GM12878 (cell line): ENCODE measurements at regions of chr6 and their contacts with region 1.

Region 1: DNA sequence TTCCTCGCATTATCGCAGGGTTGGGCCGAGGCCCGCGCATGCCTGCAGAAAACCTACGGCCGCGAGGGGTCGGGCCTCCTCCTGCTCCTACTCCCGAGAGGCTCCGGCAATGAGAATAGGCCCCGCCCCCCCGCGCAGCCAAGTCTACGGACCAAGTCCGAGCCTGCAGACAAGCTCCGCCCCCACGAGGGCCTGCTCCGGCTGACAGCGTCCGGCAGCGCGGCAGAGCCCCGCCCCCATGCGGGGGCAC is 3.1 kb upstream of the GPSM3 start:
- DNase-seq: peak; percentile 97
- ATAC-seq: peak; percentile 85
- H3K4me3 ChIP-seq: no peak overlapping the region
- H3K27ac ChIP-seq: no peak overlapping the region; the same call in 1 of the 2 replicates
- H3K4me1 ChIP-seq: peaks cover 26% of the 10 kb centered on the region
- H3K27me3 ChIP-seq: no peaks in the 10 kb centered on the region
- CTCF ChIP-seq: peak; percentile 13 to 34 (median 31); a peak in 4 of 6 replicates
- EP300 ChIP-seq: no peak
- POLR2A ChIP-seq: no peak
- RAD21 ChIP-seq: no peak

Region 2: DNA sequence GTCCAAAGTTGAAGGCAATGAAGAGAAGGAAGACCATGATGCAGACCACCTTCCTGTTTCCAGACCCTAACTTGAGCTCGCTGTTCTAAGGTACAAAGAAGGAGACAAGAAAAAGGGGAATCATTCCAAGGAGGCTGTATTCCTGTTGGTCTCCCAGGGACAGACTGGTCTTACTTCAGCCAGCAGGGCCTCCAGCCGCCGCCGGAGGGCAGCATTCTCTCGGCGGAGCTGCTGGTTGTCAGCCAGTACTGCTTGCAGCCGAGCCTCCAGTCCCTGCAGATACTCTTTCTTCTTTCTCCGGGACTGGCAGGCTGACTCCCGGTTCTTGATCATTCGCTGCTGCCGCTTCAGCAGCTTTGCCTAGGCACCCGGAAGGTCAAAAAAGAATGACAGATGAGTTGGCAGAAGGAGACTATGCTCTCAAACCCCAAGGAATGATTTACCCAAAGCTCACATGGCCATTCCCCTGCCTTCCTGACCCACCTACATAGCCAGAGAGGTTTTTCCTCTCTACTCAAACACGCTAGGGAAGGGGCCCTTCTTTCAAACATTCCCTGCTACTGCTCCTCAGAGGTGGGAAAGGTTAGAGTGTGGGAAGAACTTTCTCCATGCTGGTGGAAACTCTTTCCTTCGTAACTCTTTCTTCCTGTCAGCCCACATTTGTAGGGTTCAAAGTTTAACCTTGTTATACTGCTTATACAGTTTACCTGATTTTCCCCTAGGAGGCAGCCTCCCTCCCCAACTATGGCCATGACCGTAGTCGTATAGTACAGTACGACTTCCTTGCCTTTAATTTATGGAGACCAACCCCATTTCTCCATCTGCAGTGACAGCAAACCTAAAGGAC is 76.6 kb before region 1 on chr6:
- CTCF ChIA-PET with region 1: interaction called, 16 read pairs
- POLR2A ChIA-PET with region 1: interaction called, 5 read pairs
- RAD21 ChIA-PET with region 1: interaction called, 3 read pairs
- SMC1A ChIA-PET with region 1: interaction called, 5 read pairs
- in situ Hi-C with region 1: no loop called
- intact Hi-C with region 1: loop called (anchors 1 kb)
- DNase-seq: peak; percentile 24
- ATAC-seq: peak; percentile 99
- H3K4me3 ChIP-seq: no peak overlapping the region
- H3K27ac ChIP-seq: no peak overlapping the region
- H3K4me1 ChIP-seq: no peaks in the 10 kb centered on the region
- H3K27me3 ChIP-seq: no peaks in the 10 kb centered on the region
- CTCF ChIP-seq: peak; percentile 93 to 96 (median 95)
- EP300 ChIP-seq: no peak
- POLR2A ChIP-seq: no peak; the same call in 1 of the 2 replicates
- RAD21 ChIP-seq: peak; percentile 73

Region 3: GRCh38 chr6:32127717-32128592 is 67.6 kb before region 1 on chr6 and contains the start of gene ATF6B:
- CTCF ChIA-PET with region 1: interaction called, 35 read pairs
- POLR2A ChIA-PET with region 1: interaction called, 69 read pairs
- RAD21 ChIA-PET with region 1: interaction called, 27 read pairs
- SMC1A ChIA-PET with region 1: interaction called, 24 read pairs
- in situ Hi-C with region 1: no loop called
- intact Hi-C with region 1: loop called (anchors 1 kb)
- DNase-seq: peak; percentile 97
- ATAC-seq: peak; percentile 95
- H3K4me3 ChIP-seq: peak within 1 kb of the TSS; percentile 88
- H3K27ac ChIP-seq: peak within 1 kb of the TSS; percentile 95
- H3K4me1 ChIP-seq: peaks cover 13% of the 10 kb centered on the region
- H3K27me3 ChIP-seq: no peaks in the 10 kb centered on the region
- CTCF ChIP-seq: no peak
- EP300 ChIP-seq: no peak
- POLR2A ChIP-seq: peak; percentile 91
- RAD21 ChIP-seq: no peak
- polyA plus RNA-seq, gene ATF6B: 13.6 to 16.0 TPM

Region 4: GRCh38 chr6:32177788-32178546 is 17.6 kb before region 1 on chr6 and contains the start of gene RNF5:
- CTCF ChIA-PET with region 1: interaction called, 19 read pairs
- POLR2A ChIA-PET with region 1: interaction called, 123 read pairs
- RAD21 ChIA-PET with region 1: interaction called, 21 read pairs
- SMC1A ChIA-PET with region 1: interaction called, 41 read pairs
- in situ Hi-C with region 1: no loop called
- intact Hi-C with region 1: loop called (anchors 2 kb)
- DNase-seq: peak; percentile 100
- ATAC-seq: peak; percentile 91
- H3K4me3 ChIP-seq: peak within 1 kb of the TSS; percentile 86
- H3K27ac ChIP-seq: peak within 1 kb of the TSS; percentile 79
- H3K4me1 ChIP-seq: peaks cover 10% of the 10 kb centered on the region
- H3K27me3 ChIP-seq: no peaks in the 10 kb centered on the region
- CTCF ChIP-seq: no peak
- EP300 ChIP-seq: no peak
- POLR2A ChIP-seq: no peak; the same call in none of the 2 replicates
- RAD21 ChIP-seq: no peak
- polyA plus RNA-seq, gene RNF5: 31.4 to 42.0 TPM

Region 5: DNA sequence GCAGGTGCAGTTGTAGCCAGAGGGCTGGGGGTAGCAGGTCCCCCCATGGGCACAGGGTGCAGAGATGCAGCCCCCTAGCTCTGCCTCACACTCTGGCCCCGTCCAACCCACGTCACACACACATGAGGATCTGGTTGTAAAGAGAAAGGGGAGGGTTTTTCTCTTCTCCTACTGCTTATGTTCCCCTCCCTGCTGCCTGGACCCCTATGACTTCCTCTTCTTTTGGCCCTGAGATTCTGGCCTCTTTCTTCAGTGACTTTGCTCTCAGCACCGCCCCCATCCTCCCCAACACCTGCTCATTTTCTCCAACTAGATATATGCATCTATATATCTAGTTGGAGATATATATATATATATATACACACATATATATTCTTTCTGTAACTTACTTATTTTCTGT is 18.5 kb after region 1 on chr6:
- CTCF ChIA-PET with region 1: no interaction called
- POLR2A ChIA-PET with region 1: no interaction called
- RAD21 ChIA-PET with region 1: no interaction called
- SMC1A ChIA-PET with region 1: no interaction called
- in situ Hi-C with region 1: no loop called
- intact Hi-C with region 1: no loop called
- DNase-seq: no peak
- ATAC-seq: no peak
- H3K4me3 ChIP-seq: no peak overlapping the region
- H3K27ac ChIP-seq: no peak overlapping the region
- H3K4me1 ChIP-seq: no peaks in the 10 kb centered on the region
- H3K27me3 ChIP-seq: peaks cover 2 to 3% of the 10 kb centered on the region in 2 experiments; a peak in 3 of 4 replicates
- CTCF ChIP-seq: no peak
- EP300 ChIP-seq: no peak
- POLR2A ChIP-seq: no peak
- RAD21 ChIP-seq: no peak

Region 6: DNA sequence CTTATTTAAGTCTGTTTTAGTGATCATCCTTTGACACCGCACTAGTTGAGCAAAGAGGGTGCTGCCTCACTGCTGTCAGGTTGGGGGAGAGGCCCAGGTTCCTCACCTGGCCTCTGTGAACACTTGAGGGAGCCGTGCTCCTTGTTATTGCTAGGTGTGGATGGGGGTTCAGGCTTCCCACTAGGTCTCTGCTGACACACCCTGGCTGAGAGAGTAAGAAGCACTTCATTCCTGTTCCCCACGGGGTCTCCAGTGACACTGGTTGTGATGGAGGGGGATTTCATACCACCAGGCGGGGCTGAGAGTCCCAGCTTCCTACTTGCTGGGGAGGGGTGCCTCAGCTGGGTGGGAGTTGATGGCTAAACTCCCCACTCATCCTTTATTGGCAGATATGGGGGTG is 39.4 kb after region 1 on chr6:
- CTCF ChIA-PET with region 1: interaction called, 3 read pairs
- POLR2A ChIA-PET with region 1: interaction called, 3 read pairs
- RAD21 ChIA-PET with region 1: no interaction called
- SMC1A ChIA-PET with region 1: no interaction called
- in situ Hi-C with region 1: no loop called
- intact Hi-C with region 1: loop called (anchors 5 kb)
- DNase-seq: no peak
- ATAC-seq: peak; percentile 64
- H3K4me3 ChIP-seq: no peak overlapping the region
- H3K27ac ChIP-seq: no peak overlapping the region
- H3K4me1 ChIP-seq: no peaks in the 10 kb centered on the region
- H3K27me3 ChIP-seq: no peaks in the 10 kb centered on the region; a peak in 1 of 4 replicates
- CTCF ChIP-seq: peak in 2 of 3 experiments; percentile 9 to 41; a peak in 3 of 6 replicates
- EP300 ChIP-seq: no peak
- POLR2A ChIP-seq: no peak
- RAD21 ChIP-seq: peak; percentile 37; the same call in 1 of the 2 replicates

Region 7: DNA sequence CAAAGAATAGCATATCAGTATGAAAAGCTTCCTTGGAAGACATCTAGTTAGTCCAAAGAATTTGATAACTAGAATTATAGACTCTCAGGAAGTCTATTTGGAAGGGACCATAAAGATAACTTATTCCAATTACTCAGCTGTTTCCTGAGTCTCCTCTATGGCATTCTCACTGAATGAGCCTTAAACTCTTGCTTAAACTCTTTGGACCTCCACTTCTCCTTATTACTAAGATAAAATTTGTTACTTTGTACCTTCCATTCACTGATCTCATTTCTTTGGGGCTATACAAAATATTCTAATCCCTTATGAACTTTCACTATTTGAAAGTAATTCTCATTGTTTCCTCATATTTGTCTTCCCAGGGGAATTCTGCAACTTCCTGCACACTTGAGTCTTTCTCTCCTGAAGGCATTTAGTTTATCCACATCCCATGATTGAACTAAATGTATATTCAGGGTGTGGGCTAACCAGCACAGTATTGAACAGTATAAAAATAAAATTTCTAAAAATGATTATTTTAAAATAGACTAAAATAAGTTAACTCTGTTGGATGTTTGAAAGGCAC is 95.4 kb after region 1 on chr6:
- CTCF ChIA-PET with region 1: no interaction called
- POLR2A ChIA-PET with region 1: no interaction called
- RAD21 ChIA-PET with region 1: no interaction called
- SMC1A ChIA-PET with region 1: no interaction called
- in situ Hi-C with region 1: no loop called
- intact Hi-C with region 1: no loop called
- DNase-seq: no peak
- ATAC-seq: no peak
- H3K4me3 ChIP-seq: no peak overlapping the region
- H3K27ac ChIP-seq: no peak overlapping the region
- H3K4me1 ChIP-seq: no peaks in the 10 kb centered on the region
- H3K27me3 ChIP-seq: no peaks in the 10 kb centered on the region
- CTCF ChIP-seq: no peak
- EP300 ChIP-seq: no peak
- POLR2A ChIP-seq: no peak
- RAD21 ChIP-seq: no peak